ENCODE measurements at regions of chr22 and their contacts with region 1.

Region 1: DNA sequence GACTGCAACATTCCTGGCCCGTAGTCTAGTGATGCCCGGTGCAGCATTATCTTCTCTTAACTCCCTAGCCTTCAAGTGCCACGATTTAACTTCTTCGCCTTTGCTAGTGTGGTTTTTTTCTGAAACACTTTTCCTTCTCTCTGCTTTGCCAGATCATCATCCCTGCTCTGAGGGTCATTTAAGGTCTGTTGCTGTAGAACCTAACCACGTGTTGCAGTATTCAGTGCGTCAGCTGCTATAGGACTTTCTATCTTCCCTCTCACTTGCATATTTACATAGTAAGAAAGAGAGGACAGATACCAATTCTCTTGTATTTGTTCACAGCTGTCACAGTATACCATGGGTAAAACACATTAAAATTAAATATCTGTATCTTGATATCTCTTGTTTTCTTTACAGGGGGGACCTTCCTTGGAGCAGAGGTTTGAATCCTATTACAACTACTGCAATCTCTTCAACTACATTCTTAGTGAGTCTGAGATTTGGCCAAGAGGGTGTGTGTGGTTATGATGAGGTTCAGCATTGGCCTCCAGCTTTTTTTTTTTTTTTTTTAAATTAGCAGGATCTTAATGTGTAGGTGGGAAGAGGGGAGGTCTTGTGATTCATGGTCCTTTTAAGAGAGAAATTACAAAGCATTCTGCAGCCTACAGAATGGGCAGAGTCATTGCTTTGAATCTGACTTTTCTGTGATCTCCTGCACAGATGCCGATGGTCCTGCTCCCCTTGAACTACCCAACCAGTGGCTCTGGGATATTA is 13.5 kb downstream of the EIF3L start:
- H3K4me3 ChIP-seq: no peak overlapping the region
- H3K27ac ChIP-seq: peak overlapping the region; percentile 39
- H3K4me1 ChIP-seq: peaks cover 4% of the 10 kb centered on the region; the same call in 1 of the 2 replicates
- CTCF ChIP-seq: no peak

Region 2: GRCh38 chr22:37807410-37808293 is 55.1 kb before region 1 on chr22 and contains the start of gene GCAT:
- CTCF ChIA-PET with region 1: interaction called, 14 read pairs
- POLR2A ChIA-PET with region 1: interaction called, 4 read pairs
- H3K4me3 ChIP-seq: peak within 1 kb of the TSS; percentile 68
- H3K27ac ChIP-seq: peak within 1 kb of the TSS; percentile 45; the same call in 1 of the 2 replicates
- H3K4me1 ChIP-seq: peaks cover 6% of the 10 kb centered on the region; the same call in 1 of the 2 replicates
- CTCF ChIP-seq: no peak

Region 3: DNA sequence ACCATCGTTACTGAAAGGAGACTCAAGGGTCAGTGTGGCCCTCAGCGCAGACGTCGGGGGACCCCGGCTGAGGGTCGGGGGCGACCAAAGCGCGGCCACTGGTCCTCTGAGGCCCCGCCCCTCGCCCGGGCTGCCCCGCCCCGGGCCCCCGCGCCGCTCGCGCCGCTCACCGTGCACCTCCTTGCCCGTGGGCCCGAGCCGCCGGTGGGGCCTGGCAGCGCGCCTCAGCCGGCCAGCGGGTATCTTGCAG is 19.1 kb before region 1 on chr22:
- CTCF ChIA-PET with region 1: interaction called, 7 read pairs
- POLR2A ChIA-PET with region 1: interaction called, 14 read pairs
- H3K4me3 ChIP-seq: peak overlapping the region; percentile 74
- H3K27ac ChIP-seq: peak overlapping the region; percentile 95
- H3K4me1 ChIP-seq: no peaks in the 10 kb centered on the region
- CTCF ChIP-seq: no peak

Region 4: DNA sequence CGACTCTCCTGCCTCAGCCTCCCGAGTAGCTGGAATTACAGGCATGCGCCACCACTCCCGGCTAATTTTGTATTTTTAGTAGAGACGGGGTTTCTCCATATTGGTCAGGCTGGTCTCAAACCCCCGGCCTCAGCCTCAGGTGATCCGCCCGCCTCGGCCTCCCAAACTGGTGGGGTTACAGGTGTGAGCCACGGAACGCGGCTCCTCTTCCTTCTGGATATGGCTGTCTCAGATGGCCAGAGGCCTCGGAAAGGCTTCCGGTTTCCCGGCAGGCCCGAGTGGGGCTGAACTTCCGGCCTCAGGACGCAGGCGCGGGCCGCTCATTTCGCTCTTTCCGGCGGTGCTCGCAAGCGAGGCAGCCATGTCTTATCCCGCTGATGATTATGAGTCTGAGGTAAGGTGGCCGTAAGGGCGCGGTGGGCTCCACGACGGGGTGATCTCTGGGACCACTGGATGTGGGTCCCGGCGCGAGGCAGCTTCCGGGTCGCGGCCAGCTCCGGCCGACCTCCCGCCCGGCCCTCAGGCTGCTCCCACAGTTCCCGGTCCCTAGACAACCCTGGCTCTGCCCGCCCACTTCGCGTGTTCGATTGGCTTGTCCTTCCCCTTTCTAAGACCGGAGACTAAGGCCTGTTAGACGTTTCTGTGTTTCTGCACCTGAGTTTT is 13.5 kb before region 1 on chr22 and contains the start of gene EIF3L:
- CTCF ChIA-PET with region 1: interaction called, 48 read pairs
- POLR2A ChIA-PET with region 1: interaction called, 14 read pairs
- H3K4me3 ChIP-seq: peak within 1 kb of the TSS; percentile 82
- H3K27ac ChIP-seq: peak within 1 kb of the TSS; percentile 75
- H3K4me1 ChIP-seq: peaks cover 2% of the 10 kb centered on the region; the same call in 1 of the 2 replicates
- CTCF ChIP-seq: no peak

Region 5: DNA sequence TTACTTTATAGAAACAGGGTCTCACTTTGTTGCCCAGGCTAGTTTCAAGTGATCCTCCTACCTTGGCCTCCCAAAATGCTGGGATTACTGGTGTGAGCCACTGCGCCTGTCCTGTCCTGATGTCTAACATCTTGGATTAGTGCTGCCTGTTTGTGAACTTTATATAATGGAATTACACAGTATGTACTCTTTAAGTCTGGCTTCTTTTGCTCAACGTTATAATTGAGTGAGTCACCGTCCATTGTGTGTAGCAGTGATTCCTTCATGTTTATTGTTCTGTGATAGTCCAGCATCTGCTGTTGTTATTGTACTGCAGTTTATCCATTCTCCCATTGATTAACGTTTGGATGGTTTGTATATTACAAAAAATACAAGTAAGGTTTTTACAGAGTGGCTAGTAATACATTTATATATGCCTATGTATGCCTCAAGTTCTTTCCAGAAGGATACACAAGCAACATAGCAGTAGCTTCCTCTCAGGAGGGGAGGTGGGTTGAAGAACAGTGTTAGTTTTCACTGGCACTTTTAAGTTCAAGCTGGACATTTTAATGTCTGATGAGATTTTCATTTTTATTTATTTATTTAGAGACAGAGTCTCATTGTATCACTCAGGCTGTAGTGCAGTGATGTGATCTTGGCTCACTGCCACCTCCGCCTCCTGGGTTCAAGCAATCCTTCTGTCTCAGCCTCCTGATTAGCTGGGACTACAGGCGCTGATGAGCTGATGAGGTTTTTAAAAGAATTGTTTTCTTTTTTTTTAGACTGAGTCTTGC is 18.1 kb after region 1 on chr22:
- CTCF ChIA-PET with region 1: interaction called, 38 read pairs
- POLR2A ChIA-PET with region 1: interaction called, 4 read pairs
- H3K4me3 ChIP-seq: no peak overlapping the region
- H3K27ac ChIP-seq: no peak overlapping the region
- H3K4me1 ChIP-seq: 0 out of 2 replicates have a peak, but pooled peaks cover 3% of the 10 kb centered on the region
- CTCF ChIP-seq: no peak

Region 6: DNA sequence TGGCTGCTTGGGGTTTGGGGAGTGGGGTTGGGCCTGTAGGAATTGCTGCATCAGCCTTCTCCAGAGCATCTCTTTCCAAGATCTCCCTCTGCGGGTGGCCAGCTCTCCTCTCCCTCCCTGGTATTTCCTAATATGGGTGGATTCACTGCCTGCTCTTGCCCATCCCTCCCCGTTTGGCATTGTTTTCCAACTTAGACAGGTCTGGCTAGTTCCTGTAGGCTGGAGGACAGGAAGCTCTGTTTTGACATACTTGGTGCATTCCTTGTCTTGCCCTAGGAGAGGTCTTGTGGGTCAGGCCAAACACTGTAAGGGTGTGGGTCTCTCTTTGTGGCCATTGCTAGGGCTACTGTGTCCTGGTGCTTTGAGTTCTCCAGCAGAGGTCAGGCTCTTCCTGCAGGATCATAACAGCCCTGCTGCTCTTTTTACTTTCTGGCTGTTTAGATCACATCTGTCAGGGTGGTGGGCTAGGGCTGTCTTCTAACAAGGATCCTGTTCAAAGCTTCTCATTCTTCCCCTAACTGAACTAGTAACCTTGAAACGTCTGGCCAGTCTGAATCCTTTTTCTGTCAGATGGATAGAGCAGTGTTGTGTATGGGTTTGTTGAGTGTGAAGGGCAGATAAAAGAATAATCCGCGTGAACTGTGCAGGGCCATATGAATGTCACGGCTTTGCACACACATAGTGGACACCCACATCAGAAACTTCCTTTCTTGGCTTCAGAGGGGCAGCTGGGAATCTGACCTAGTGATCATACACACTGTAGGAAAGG is 25.0 kb after region 1 on chr22:
- CTCF ChIA-PET with region 1: interaction called, 16 read pairs
- POLR2A ChIA-PET with region 1: no interaction called
- H3K4me3 ChIP-seq: no peak overlapping the region
- H3K27ac ChIP-seq: no peak overlapping the region
- H3K4me1 ChIP-seq: no peaks in the 10 kb centered on the region
- CTCF ChIP-seq: peak; percentile 53; the same call in 1 of the 2 replicates

Region 7: GRCh38 chr22:37905534-37906363 is 43.0 kb after region 1 on chr22 and contains the start of gene MICALL1:
- CTCF ChIA-PET with region 1: interaction called, 8 read pairs
- POLR2A ChIA-PET with region 1: interaction called, 10 read pairs
- H3K4me3 ChIP-seq: peak within 1 kb of the TSS; percentile 72
- H3K27ac ChIP-seq: peak within 1 kb of the TSS; percentile 98
- H3K4me1 ChIP-seq: peaks cover 10% of the 10 kb centered on the region; the same call in 1 of the 2 replicates
- CTCF ChIP-seq: peak; percentile 28; the same call in 1 of the 2 replicates